A549 (cell line): ENCODE measurements at regions of chr9 and their contacts with region 1.

Region 1: GRCh38 chr9:113876151-113876992 is at the start of gene ZNF618:
- DNase-seq: peak; percentile 29 to 55
- ATAC-seq: peak; percentile 87 to 89
- H3K4me3 ChIP-seq: peak within 1 kb of the TSS; percentile 100
- H3K27ac ChIP-seq: peak within 1 kb of the TSS; percentile 97 to 100
- H3K4me1 ChIP-seq: peaks cover 18% of the 10 kb centered on the region; the same call in 2 of the 3 replicates
- CTCF ChIP-seq: peak; percentile 71
- EP300 ChIP-seq: no peak
- POLR2A ChIP-seq: no peak
- RAD21 ChIP-seq: peak; percentile 7 to 52; a peak in 4 of 5 replicates
- polyA plus RNA-seq, gene ZNF618: 9.0 and 13.1 TPM in 2 replicates

Region 2: GRCh38 chr9:113857875-113858274 is 18.5 kb before region 1 on chr9:
- CTCF ChIA-PET with region 1: interaction called, 12 read pairs
- POLR2A ChIA-PET with region 1: interaction called, 4 read pairs
- DNase-seq: no peak
- ATAC-seq: no peak
- H3K4me3 ChIP-seq: no peak overlapping the region
- H3K27ac ChIP-seq: no peak overlapping the region
- H3K4me1 ChIP-seq: no peaks in the 10 kb centered on the region
- CTCF ChIP-seq: no peak
- EP300 ChIP-seq: no peak
- POLR2A ChIP-seq: no peak
- RAD21 ChIP-seq: no peak

Region 3: DNA sequence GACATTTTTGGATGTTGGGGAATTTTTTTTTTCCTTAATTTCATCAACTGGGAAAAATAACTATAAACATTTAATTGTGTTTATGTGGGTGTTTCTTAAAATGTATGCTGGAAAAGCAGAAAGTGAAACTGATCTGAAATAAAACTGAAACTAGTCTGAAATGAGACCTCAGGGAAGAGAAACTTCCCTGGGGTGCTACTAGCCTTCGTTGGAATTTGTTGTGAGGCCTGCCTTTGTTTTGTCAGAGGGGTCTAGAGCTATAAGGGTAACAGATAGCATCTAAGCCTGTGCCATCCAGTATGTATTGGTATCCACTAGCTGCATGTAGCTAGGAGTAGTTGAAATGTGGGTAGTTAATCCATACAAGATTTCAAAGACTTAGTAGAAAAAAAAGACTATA is 10.1 kb after region 1 on chr9:
- CTCF ChIA-PET with region 1: interaction called, 12 read pairs
- POLR2A ChIA-PET with region 1: interaction called, 4 read pairs
- DNase-seq: no peak
- ATAC-seq: no peak
- H3K4me3 ChIP-seq: no peak overlapping the region
- H3K27ac ChIP-seq: no peak overlapping the region
- H3K4me1 ChIP-seq: peaks cover 6% of the 10 kb centered on the region; the same call in 2 of the 3 replicates
- CTCF ChIP-seq: no peak
- EP300 ChIP-seq: no peak
- POLR2A ChIP-seq: no peak
- RAD21 ChIP-seq: no peak